ENCODE measurements at regions of chr6 and their contacts with region 1.

Region 1: DNA sequence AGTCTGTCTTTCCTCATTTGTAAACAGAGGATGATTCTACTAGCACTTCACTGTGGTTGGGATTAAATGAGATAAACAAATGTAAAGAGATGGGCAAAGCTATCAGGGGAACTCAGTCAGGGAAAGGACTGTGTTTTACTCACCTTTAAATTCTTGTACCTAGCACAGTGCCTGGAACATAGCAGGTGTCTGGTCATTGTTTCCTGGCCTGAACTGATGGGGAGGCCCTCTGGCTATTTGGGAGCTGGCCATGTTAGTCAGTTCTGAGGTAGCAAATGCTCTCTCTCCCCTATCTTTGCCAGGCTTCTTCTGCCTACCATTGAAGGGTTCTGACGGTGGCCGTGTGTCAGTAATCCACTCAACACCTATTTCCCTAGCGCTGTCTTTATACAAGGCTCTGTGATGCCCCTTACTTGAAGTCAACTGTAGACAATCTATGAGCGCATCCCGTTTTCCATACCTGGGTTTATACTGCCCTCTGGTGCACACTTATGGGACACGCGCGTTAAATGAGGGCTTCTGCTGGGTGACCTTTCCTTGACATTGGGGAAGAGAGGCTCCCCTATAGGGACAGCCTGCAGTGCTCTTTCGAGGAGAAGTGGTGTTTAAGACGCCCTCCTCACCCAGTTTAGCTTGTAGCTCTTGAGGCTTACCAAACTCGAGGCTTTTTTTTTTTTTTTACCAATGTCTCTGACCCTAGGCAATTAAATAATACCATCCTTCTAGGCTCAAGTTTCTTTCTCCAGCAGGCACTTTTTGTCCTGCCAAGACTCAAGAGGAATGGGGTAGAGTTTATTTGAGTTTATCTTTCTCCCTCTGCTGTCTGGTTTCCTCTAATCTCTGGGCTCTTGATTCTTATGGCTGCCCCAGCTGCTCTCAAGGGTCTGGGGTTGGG is 4.0 kb upstream of the SPATS1 start:
- DNase-seq: peak; percentile 58 to 88 (median 67)
- H3K4me3 ChIP-seq: no peak overlapping the region
- H3K27ac ChIP-seq: no peak overlapping the region
- H3K4me1 ChIP-seq: no peaks in the 10 kb centered on the region
- H3K27me3 ChIP-seq: peaks cover 7% of the 10 kb centered on the region
- CTCF ChIP-seq: peak; percentile 58 to 87 (median 79)
- POLR2A ChIP-seq: no peak

Region 2: DNA sequence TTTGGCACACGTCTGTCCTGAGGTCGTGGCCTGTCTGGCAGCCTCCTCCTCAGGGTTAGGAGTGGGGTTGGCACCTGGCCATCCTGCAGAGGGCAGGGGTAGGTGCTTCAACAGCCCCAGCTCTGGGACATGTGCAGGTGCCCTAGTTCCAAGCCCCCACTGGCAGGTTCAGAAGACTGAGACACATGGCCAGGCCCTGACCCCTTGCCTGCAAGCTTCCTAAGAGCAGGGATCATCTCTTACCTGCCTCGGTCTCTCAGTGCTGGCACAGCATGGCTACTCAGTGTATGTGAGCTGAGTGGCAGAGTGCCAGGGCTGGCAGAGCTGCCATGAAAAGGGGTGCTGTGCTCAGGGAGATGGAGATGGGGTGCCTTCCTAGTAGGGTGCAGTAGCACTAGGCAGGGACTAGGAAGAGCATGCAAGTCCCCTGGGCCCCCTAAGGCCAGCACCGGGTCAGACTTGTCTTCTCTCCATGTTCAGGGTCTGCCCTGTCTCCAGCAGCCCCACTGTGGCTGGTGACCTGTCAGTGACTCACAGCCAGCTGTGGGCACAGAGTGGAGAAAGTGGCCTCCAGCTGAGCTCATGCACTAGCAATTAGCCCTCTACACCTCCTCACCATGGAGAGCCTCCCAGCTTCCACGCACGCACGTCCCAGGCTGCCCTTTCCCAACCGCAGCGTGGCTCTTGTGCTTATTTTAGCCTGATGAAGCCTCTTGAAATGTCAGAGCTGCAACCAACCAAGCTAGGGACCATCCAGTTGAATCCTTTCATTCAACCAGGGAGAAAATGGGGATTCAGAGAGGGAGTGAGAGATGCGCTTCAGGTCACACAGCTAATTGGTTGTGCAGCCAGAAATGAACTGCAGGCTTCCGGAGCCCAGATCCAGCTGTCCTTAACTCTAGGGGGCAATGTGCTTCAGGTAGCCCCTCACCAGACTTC is 327.8 kb before region 1 on chr6:
- intact Hi-C with region 1: no loop called
- DNase-seq: peak in 5 of 7 donors; percentile 48 to 69 (median 54)
- H3K4me3 ChIP-seq: no peak overlapping the region
- H3K27ac ChIP-seq: no peak overlapping the region
- H3K4me1 ChIP-seq: peaks cover 0 to 9% of the 10 kb centered on the region in 2 donors
- H3K27me3 ChIP-seq: no peaks in the 10 kb centered on the region
- CTCF ChIP-seq: no peak
- POLR2A ChIP-seq: no peak

Region 3: GRCh38 chr6:44096612-44097011 is 241.9 kb before region 1 on chr6:
- intact Hi-C with region 1: loop called (anchors 5 to 10 kb)
- DNase-seq: peak; percentile 82 to 92 (median 83)
- H3K4me3 ChIP-seq: no peak overlapping the region
- H3K27ac ChIP-seq: no peak overlapping the region
- H3K4me1 ChIP-seq: no peaks in the 10 kb centered on the region
- H3K27me3 ChIP-seq: no peaks in the 10 kb centered on the region
- CTCF ChIP-seq: peak; percentile 59 to 95 (median 90)
- POLR2A ChIP-seq: no peak

Region 4: DNA sequence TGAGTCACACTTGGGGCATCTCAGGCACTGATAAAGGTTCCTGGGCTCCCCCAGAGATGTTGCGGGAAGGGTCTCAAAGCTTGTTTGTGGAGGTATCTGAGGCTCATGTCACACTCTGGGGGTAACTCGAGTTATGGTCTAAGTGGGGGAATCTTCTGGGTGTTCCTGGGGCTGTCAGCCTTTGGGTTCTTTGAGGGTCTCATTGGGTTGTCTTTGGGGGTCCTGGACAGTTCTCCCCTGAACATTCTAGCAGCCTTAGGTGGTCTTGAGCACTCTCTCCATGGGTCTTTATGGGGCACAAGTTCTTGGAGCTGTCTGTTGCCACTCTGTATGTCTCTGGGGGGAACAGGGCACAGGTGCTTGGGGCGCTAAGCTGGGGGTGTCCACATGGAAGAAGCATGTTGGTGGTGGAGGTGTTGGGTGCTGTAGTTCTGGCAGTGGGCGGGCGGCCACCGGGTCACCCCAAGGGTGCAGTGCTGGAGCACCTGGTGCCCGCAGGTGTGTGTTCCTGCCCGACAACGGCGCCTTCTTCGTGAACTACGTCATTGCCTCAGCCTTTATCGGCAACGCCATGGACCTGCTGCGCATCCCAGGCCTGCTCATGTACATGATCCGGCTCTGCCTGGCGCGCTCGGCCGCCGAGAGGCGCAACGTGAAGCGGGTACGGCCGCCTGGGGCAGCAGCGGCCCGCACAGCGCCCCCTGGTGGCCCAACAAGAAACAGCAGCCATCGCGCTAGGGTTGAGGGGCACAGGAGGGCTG is 186.9 kb before region 1 on chr6:
- intact Hi-C with region 1: loop called in 1 of 2 experiments (anchors 10 kb)
- DNase-seq: peak; percentile 71 to 90 (median 82)
- H3K4me3 ChIP-seq: no peak overlapping the region
- H3K27ac ChIP-seq: no peak overlapping the region
- H3K4me1 ChIP-seq: no peaks in the 10 kb centered on the region
- H3K27me3 ChIP-seq: no peaks in the 10 kb centered on the region
- CTCF ChIP-seq: peak; percentile 94 to 100 (median 99)
- POLR2A ChIP-seq: no peak

Region 5: GRCh38 chr6:44172731-44173500 is 165.6 kb before region 1 on chr6:
- intact Hi-C with region 1: loop called in 1 of 2 experiments (anchors 10 kb)
- DNase-seq: peak; percentile 81 to 96 (median 90)
- H3K4me3 ChIP-seq: no peak overlapping the region
- H3K27ac ChIP-seq: no peak overlapping the region
- H3K4me1 ChIP-seq: peaks cover 0 to 5% of the 10 kb centered on the region in 2 donors
- H3K27me3 ChIP-seq: no peaks in the 10 kb centered on the region
- CTCF ChIP-seq: peak; percentile 80 to 96 (median 94)
- POLR2A ChIP-seq: no peak

Region 6: DNA sequence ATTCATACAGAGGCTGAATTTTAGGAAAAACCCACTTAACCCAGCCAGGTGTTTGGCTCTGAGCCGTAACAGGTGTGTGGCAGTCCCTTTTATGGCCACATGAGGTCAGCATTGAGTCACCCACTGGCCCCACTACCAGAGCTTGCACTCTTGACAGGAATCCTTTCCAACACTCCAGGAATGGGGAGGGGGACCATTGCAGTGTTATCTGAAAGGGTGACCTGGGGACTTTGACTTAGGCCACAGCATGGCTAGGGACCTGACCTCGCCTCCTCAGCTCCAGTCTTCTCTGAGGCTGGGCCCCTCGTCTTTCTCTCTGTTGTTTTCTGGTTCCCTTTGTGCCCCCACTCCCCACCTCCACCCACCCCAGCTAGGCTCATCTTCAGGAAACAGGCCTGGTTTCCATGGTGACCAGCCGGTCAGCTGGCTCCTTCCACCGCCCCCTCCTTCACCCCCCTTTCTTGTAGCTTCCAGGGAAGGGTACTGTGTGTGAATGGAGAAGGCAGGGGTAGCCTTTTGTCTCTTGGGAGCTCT is 70.3 kb before region 1 on chr6:
- intact Hi-C with region 1: loop called (anchors 2 to 5 kb)
- DNase-seq: peak in 6 of 7 donors; percentile 43 to 85 (median 62)
- H3K4me3 ChIP-seq: no peak overlapping the region
- H3K27ac ChIP-seq: no peak overlapping the region
- H3K4me1 ChIP-seq: peaks cover 18 to 19% of the 10 kb centered on the region in 2 donors
- H3K27me3 ChIP-seq: peaks cover 11% of the 10 kb centered on the region
- CTCF ChIP-seq: peak; percentile 83 to 94 (median 87)
- POLR2A ChIP-seq: no peak

Region 7: DNA sequence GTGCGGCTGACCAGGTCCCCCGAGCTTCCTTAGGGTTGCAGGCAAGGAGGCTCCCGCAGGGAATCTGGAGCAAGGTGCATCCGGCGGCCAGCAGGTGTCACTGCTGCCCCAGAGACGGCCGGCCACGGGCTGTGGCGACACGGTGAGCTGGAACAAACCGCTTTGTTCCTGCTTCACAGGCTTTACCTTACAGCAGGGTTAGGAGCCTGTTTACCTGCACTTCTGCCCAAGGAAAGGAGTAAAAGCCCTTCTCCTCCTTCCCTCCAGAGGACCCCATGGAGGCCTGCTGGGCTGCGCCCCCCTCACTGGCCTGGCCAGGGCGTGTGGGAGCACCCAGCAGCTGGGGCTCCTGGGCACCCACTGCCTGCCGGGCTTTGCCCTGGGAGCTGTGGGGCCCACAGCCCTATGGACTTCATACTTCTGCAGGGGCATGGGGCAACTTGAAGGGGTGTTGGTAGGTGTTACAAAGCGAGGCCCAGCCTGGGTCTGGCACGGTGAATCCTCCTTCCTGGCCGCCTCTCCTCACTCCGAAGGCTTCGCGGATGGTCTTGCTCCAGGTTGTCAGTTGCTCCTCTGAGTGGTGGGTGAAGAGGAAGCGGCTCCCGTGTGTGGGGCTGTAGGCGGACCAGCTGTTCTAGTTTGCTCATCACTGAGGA is 137.4 kb after region 1 on chr6:
- intact Hi-C with region 1: no loop called
- DNase-seq: peak; percentile 70 to 88 (median 82)
- H3K4me3 ChIP-seq: no peak overlapping the region
- H3K27ac ChIP-seq: no peak overlapping the region
- H3K4me1 ChIP-seq: no peaks in the 10 kb centered on the region
- H3K27me3 ChIP-seq: no peaks in the 10 kb centered on the region
- CTCF ChIP-seq: peak; percentile 82 to 97 (median 92)
- POLR2A ChIP-seq: no peak

Measured in adrenal gland (tissue), 19 donors.